ENCODE measurements at regions of chr9 and their contacts with region 1.

Region 1: DNA sequence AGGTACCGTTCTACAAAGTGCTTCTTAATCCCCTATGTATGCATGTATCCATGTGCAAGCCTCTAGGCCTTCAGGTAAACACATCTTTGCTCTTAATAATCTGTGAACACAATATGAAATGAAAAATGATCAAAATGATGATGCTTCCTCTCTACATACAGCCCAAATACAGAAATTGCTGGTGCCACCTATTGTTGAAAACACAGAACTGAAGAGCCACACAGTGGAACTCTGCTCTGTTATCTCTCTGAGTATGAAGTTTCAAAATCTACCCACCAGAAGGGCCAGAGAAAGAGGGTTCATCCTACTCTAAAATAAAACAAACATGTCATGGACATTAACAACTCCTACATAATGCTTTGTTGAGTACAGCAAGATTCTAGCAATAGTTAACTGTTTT is 71.3 kb downstream of the GLIS3 start:
- DNase-seq: no peak
- ATAC-seq: peak; percentile 54
- H3K4me3 ChIP-seq: no peak overlapping the region
- H3K27ac ChIP-seq: no peak overlapping the region
- H3K4me1 ChIP-seq: peaks cover 0 to 1% of the 10 kb centered on the region in 2 donors
- H3K27me3 ChIP-seq: no peaks in the 10 kb centered on the region

Region 2: GRCh38 chr9:4086119-4087090 is 142.2 kb before region 1 on chr9:
- intact Hi-C with region 1: loop called in 1 of 2 experiments (anchors 10 kb)
- DNase-seq: no peak
- ATAC-seq: no peak
- H3K4me3 ChIP-seq: no peak overlapping the region
- H3K27ac ChIP-seq: no peak overlapping the region
- H3K4me1 ChIP-seq: peaks cover 2 to 14% of the 10 kb centered on the region in 2 donors
- H3K27me3 ChIP-seq: no peaks in the 10 kb centered on the region

Region 3: DNA sequence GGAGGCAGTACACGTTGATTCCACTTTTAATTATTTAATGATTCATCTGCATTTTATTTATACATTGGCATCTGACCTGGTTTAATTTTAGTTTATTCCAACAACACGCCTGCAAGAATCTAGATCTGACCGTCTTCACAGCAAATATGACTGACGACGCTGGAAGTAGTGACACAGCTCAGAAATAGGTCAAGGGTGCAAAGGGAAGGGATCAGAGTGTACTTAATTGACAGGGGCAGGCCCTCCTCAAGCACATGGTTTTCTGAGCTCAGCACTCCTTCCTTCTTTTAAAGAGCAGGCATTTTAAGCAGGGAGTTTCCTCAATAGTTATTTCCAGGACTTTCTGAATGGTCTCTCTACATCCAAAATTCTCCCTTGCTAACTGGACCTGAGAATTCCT is 53.8 kb before region 1 on chr9:
- intact Hi-C with region 1: loop called in 1 of 2 experiments (anchors 10 kb)
- DNase-seq: no peak
- ATAC-seq: no peak
- H3K4me3 ChIP-seq: no peak overlapping the region
- H3K27ac ChIP-seq: no peak overlapping the region
- H3K4me1 ChIP-seq: peaks cover 3 to 4% of the 10 kb centered on the region in 2 donors
- H3K27me3 ChIP-seq: no peaks in the 10 kb centered on the region